IMR-90 (cell line): ENCODE measurements at regions of chr4 and their contacts with region 1.

Region 1: DNA sequence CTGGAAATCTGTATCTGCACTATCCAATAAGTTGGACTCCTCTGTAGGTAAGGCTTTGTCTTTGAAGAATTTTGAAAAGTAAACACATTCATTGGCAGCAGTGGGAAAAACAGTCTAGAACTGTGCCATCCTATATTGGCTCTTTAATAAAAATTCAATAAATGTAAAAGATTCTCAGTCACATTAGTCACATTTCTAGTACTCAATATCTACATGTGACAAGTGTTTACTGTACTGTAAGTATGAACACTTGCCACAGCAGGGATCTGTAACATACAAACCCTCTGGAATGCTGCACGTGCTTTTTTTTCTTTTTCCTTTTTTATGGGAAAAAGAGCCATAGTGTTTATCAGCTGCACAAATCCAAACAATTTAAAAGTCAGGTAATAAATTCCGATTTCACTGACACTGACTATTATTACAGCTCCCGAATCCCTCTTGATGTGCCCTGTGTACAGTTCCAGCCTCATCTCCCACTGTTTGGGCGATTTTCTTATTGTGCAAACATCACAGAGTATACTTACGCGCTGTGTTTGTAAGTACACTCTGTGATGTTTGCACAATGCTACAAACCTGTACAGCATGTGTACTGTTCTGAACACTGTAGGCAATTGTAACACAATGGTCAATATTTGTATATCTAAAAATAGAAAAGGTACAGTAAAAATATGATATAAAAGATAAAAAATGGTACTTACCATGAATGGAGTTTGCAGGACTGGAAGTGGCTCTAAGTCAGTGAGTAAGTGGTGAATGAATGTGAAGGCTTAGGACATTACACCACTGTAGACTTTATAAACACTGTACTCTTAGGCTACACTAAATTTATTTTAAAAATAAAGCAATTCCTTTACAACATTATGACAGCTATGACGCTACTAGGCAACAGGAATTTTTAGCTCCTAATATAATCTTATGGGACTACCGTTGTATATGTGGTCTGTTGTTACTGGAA is 8.7 kb downstream of the PYURF start:
- DNase-seq: no peak
- ATAC-seq: peak; percentile 47
- H3K4me3 ChIP-seq: no peak overlapping the region
- H3K27ac ChIP-seq: no peak overlapping the region
- H3K4me1 ChIP-seq: no peaks in the 10 kb centered on the region
- H3K27me3 ChIP-seq: peaks cover 2% of the 10 kb centered on the region; the same call in 1 of the 2 replicates
- CTCF ChIP-seq: no peak
- POLR2A ChIP-seq: no peak
- RAD21 ChIP-seq: no peak

Region 2: DNA sequence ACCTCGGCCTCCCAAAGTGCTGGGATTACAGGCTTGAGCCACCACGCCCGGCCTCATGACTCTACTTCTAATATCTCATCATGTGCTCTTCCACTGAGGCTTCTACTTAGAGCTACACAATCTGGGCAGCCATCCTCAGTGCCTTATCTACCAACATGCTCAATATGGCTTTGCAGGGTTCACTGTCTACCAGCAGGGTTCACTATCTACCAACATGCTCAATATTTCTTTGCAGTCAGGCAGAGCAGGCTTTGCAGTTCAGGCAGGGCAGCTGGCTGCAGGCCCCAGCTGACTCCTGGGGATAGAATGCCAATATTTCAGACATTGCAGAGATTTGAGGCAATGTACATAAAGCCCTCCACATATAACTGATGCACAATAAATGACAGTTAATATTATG is 459.9 kb before region 1 on chr4:
- CTCF ChIA-PET with region 1: no interaction called
- POLR2A ChIA-PET with region 1: no interaction called
- dilution Hi-C with region 1: no loop called
- in situ Hi-C with region 1: no loop called
- intact Hi-C with region 1: loop called (anchors 5 kb)
- DNase-seq: peak; percentile 72
- ATAC-seq: peak; percentile 99
- H3K4me3 ChIP-seq: no peak overlapping the region
- H3K27ac ChIP-seq: no peak overlapping the region
- H3K4me1 ChIP-seq: no peaks in the 10 kb centered on the region
- H3K27me3 ChIP-seq: no peaks in the 10 kb centered on the region
- CTCF ChIP-seq: peak; percentile 64
- POLR2A ChIP-seq: no peak
- RAD21 ChIP-seq: peak; percentile 81

Region 3: GRCh38 chr4:88217920-88218319 is 296.9 kb before region 1 on chr4:
- CTCF ChIA-PET with region 1: interaction called, 25 read pairs
- POLR2A ChIA-PET with region 1: no interaction called
- dilution Hi-C with region 1: no loop called
- in situ Hi-C with region 1: loop called (anchors 5 kb)
- intact Hi-C with region 1: loop called (anchors 1 kb)
- DNase-seq: no peak
- ATAC-seq: no peak
- H3K4me3 ChIP-seq: no peak overlapping the region
- H3K27ac ChIP-seq: no peak overlapping the region
- H3K4me1 ChIP-seq: no peaks in the 10 kb centered on the region
- H3K27me3 ChIP-seq: peaks cover 6% of the 10 kb centered on the region
- CTCF ChIP-seq: no peak
- POLR2A ChIP-seq: no peak
- RAD21 ChIP-seq: no peak

Region 4: DNA sequence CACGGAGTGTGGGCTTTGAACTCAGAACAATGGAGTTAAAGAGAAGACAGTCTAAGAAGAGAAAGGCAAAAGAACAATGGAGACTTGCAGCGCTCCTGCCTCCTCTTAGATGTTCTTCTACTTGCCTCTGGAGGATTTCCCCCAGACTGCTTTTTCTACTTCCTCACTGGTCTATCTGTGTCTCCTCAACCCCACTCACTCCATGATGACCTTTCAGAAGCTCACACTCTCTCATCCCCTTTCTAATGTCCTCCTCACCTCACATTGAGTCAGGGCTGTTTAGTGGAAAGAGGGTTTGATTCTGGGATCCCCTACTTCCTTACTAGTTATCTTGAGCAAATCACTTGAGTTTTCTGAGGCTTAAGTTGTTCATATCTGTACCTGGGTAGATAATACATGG is 148.4 kb before region 1 on chr4:
- CTCF ChIA-PET with region 1: interaction called, 4 read pairs
- POLR2A ChIA-PET with region 1: no interaction called
- dilution Hi-C with region 1: no loop called
- in situ Hi-C with region 1: loop called (anchors 10 kb)
- intact Hi-C with region 1: loop called (anchors 1 kb)
- DNase-seq: no peak
- ATAC-seq: no peak
- H3K4me3 ChIP-seq: no peak overlapping the region
- H3K27ac ChIP-seq: no peak overlapping the region
- H3K4me1 ChIP-seq: no peaks in the 10 kb centered on the region
- H3K27me3 ChIP-seq: peaks cover 4% of the 10 kb centered on the region; the same call in 1 of the 2 replicates
- CTCF ChIP-seq: no peak
- POLR2A ChIP-seq: no peak
- RAD21 ChIP-seq: no peak

Region 5: DNA sequence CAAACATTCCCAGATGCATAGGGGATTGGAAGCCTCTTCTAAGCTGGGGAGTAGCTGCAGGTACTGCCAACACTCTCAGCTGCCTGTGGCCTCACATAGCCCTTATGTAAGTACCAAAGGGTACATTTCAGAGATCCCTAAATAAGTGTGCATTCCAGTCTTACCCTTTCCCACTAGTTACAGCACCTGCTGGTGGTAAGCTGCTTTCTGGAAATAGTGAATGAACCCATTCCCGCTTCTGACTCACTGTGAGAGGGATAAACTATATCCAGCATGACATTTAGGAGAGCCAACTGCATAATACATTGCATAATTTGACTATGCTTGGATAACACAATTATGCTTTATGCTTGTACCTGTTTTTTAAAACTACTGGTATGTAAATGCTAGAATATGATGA is 393.2 kb after region 1 on chr4:
- CTCF ChIA-PET with region 1: no interaction called
- POLR2A ChIA-PET with region 1: no interaction called
- dilution Hi-C with region 1: no loop called
- in situ Hi-C with region 1: no loop called
- intact Hi-C with region 1: no loop called
- DNase-seq: peak; percentile 58
- ATAC-seq: peak; percentile 62
- H3K4me3 ChIP-seq: no peak overlapping the region
- H3K27ac ChIP-seq: no peak overlapping the region
- H3K4me1 ChIP-seq: peaks cover 4% of the 10 kb centered on the region
- H3K27me3 ChIP-seq: no peaks in the 10 kb centered on the region
- CTCF ChIP-seq: no peak
- POLR2A ChIP-seq: no peak
- RAD21 ChIP-seq: no peak

Region 6: DNA sequence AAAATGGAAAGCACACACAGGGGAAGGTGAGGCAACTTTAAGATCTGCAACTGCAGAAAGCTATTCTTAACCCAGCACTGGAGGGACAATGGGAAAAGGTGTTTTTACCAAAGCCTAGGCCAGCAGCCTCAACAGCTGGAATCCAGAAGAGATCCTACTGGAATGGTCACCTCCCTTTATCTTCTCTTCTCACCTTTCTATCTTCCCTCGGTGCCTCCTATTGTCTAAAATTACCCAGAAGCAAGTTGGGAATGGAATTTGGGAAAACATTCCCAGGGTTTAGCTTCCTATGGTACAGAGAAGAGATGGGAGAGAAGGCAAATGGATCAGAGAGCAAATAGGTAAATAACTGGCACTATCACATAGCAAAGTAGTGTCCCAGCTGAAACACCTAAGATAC is 669.6 kb after region 1 on chr4:
- CTCF ChIA-PET with region 1: no interaction called
- POLR2A ChIA-PET with region 1: no interaction called
- dilution Hi-C with region 1: no loop called
- in situ Hi-C with region 1: no loop called
- intact Hi-C with region 1: no loop called
- DNase-seq: no peak
- ATAC-seq: no peak
- H3K4me3 ChIP-seq: no peak overlapping the region
- H3K27ac ChIP-seq: no peak overlapping the region
- H3K4me1 ChIP-seq: no peaks in the 10 kb centered on the region
- H3K27me3 ChIP-seq: no peaks in the 10 kb centered on the region
- CTCF ChIP-seq: no peak
- POLR2A ChIP-seq: no peak
- RAD21 ChIP-seq: no peak